OCI-LY7 (cell line): ENCODE measurements at regions of chr11 and their contacts with region 1.

Region 1: GRCh38 chr11:83156150-83156995 is 558 bp upstream of the PCF11 start:
- DNase-seq: peak; percentile 100
- H3K4me3 ChIP-seq: peak overlapping the region; percentile 95
- H3K27ac ChIP-seq: peak overlapping the region; percentile 71
- H3K4me1 ChIP-seq: peaks cover 56% of the 10 kb centered on the region
- CTCF ChIP-seq: no peak

Region 2: GRCh38 chr11:82969811-82970210 is 186.6 kb before region 1 on chr11:
- CTCF ChIA-PET with region 1: no interaction called
- POLR2A ChIA-PET with region 1: interaction called, 3 read pairs
- intact Hi-C with region 1: loop called (anchors 2 kb)
- DNase-seq: peak; percentile 94
- H3K4me3 ChIP-seq: peak overlapping the region; percentile 33
- H3K27ac ChIP-seq: peak overlapping the region; percentile 98
- H3K4me1 ChIP-seq: peaks cover 88% of the 10 kb centered on the region
- CTCF ChIP-seq: no peak

Region 3: DNA sequence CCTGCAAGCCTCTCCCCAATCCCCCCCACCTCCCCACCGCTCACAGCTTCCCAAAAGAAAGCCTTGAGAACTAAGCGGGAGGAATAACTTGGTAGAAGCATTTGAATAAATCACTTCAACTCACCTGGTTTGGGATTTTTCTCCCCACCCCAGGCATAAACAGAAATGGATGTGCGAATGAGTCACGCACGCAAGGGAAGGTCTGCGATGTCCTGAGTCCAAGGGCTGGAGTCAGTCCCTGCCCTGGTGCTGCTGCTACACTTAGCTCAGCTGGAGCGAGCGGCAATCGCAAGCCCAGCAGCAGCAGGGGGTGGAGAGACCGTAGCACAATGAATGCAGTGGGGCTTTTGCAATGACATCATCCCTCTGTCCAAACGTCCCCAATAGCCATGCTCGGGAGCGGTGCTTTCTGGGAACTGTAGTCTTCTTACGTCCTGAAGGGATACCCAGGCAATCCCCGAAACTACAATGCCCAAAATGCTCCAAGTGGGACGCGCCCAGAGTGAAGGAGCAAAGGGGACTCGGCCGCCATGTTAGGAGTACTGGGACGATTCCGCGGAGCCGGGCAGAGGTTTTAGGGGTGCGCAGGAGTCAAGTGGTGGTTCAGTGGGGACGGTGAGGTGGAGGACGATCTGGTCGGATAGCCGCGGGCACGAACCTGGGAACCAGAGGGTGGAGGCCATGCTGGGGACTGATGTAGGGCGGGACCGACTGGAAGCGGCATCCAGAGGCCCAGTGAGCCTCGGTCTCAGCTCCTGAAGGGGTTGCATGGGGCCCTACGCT is 84.6 kb before region 1 on chr11 and contains the start of gene RAB30:
- CTCF ChIA-PET with region 1: interaction called, 4 read pairs
- POLR2A ChIA-PET with region 1: interaction called, 9 read pairs
- intact Hi-C with region 1: loop called (anchors 2 kb)
- DNase-seq: peak; percentile 99
- H3K4me3 ChIP-seq: peak within 1 kb of the TSS; percentile 86
- H3K27ac ChIP-seq: peak within 1 kb of the TSS; percentile 70
- H3K4me1 ChIP-seq: peaks cover 40% of the 10 kb centered on the region
- CTCF ChIP-seq: no peak
- total RNA-seq, gene RAB30: 27.1 and 33.3 TPM in 2 replicates

Region 4: GRCh38 chr11:83193315-83194280 is 37.2 kb after region 1 on chr11 and contains the start of gene ANKRD42:
- CTCF ChIA-PET with region 1: no interaction called
- POLR2A ChIA-PET with region 1: interaction called, 4 read pairs
- intact Hi-C with region 1: loop called (anchors 1 kb)
- DNase-seq: peak; percentile 92
- H3K4me3 ChIP-seq: peak within 1 kb of the TSS; percentile 80
- H3K27ac ChIP-seq: peak within 1 kb of the TSS; percentile 34
- H3K4me1 ChIP-seq: peaks cover 18% of the 10 kb centered on the region
- CTCF ChIP-seq: peak; percentile 29; the same call in 1 of the 2 replicates
- total RNA-seq, gene ANKRD42: 1.1 and 2.2 TPM in 2 replicates